ENCODE measurements at regions of chr11 and their contacts with region 1.

Region 1: GRCh38 chr11:64269380-64270234 is 14.9 kb downstream of the BAD start:
- DNase-seq: peak; percentile 97 to 99
- ATAC-seq: peak; percentile 86 to 92 (median 90)
- H3K4me3 ChIP-seq: peak overlapping the region; percentile 70 to 90 (median 79)
- H3K27ac ChIP-seq: peak overlapping the region; percentile 89 to 100 (median 98)
- H3K4me1 ChIP-seq: peaks cover 18 to 55% (median 36%) of the 10 kb centered on the region in 9 donors
- H3K27me3 ChIP-seq: no peaks in the 10 kb centered on the region
- CTCF ChIP-seq: peak in 5 of 9 donors; percentile 4 to 56 (median 39)

Region 2: GRCh38 chr11:64088162-64089026 is 181.2 kb before region 1 on chr11:
- intact Hi-C with region 1: no loop called
- DNase-seq: no peak
- ATAC-seq: no peak
- H3K4me3 ChIP-seq: no peak overlapping the region
- H3K27ac ChIP-seq: no peak overlapping the region
- H3K4me1 ChIP-seq: peaks cover 0 to 26% (median 10%) of the 10 kb centered on the region in 9 donors
- H3K27me3 ChIP-seq: no peaks in the 10 kb centered on the region
- CTCF ChIP-seq: peak in 2 of 9 donors; percentile 9 to 21

Region 3: DNA sequence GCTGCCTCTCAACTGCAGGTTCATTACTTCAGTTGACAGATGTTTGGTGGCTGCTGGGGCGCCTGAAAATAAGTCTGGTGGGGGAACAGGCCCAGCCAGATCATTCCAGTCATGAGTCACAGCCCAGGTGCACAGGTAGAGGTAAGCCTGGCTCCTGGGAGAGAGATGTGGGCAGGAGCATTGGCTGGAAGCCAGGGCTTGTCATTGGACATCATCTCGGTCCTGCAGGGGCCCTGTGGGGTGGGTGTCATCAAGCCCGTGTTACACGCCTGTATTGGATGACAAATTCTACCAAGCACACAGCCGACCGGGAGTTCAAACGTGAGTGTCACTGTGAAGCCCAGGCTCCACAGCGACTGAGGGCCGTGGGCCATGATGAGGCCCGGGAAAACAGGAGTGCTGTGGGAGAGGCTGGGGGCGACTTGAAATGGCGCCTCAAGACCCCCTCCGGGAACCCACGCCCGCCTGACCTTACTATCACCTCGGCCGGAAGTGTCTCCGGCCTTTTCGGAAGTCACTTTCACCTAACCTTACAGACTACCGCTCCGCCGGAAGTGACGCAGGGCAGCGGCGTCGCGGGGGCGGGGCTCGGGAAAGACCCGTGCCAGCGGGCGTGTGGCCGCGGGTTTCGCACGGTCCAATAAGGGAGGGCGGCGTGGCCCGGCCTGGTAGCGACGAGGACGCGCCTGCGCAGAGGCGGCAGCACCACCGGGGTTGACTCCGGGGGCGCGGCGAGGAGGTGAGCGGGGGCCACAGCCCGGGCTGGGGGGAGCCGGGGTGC is 29.0 kb before region 1 on chr11 and contains the start of gene FKBP2:
- intact Hi-C with region 1: loop called in 3 of 10 experiments (anchors 1 to 2 kb)
- DNase-seq: peak; percentile 96 to 98
- ATAC-seq: peak; percentile 75 to 84 (median 80)
- H3K4me3 ChIP-seq: peak within 1 kb of the TSS; percentile 73 to 99 (median 88)
- H3K27ac ChIP-seq: peak within 1 kb of the TSS; percentile 95 to 100 (median 98)
- H3K4me1 ChIP-seq: peaks cover 11 to 68% (median 35%) of the 10 kb centered on the region in 9 donors
- H3K27me3 ChIP-seq: no peaks in the 10 kb centered on the region
- CTCF ChIP-seq: no peak
- total RNA-seq, gene FKBP2: 40.2 to 82.0 (median 45.9) TPM

Region 4: GRCh38 chr11:64252003-64252872 is 17.4 kb before region 1 on chr11:
- intact Hi-C with region 1: loop called in 5 of 10 experiments (anchors 1 to 2 kb)
- DNase-seq: peak; percentile 60 to 63
- ATAC-seq: peak in 7 of 8 donors; percentile 16 to 41 (median 34)
- H3K4me3 ChIP-seq: peak overlapping the region; percentile 70 to 93 (median 84)
- H3K27ac ChIP-seq: peak overlapping the region in 9 of 10 donors; percentile 71 to 87 (median 84)
- H3K4me1 ChIP-seq: peaks cover 4 to 43% (median 38%) of the 10 kb centered on the region in 9 donors
- H3K27me3 ChIP-seq: no peaks in the 10 kb centered on the region
- CTCF ChIP-seq: peak in 3 of 9 donors; percentile 11 to 37 (median 14)

Region 5: DNA sequence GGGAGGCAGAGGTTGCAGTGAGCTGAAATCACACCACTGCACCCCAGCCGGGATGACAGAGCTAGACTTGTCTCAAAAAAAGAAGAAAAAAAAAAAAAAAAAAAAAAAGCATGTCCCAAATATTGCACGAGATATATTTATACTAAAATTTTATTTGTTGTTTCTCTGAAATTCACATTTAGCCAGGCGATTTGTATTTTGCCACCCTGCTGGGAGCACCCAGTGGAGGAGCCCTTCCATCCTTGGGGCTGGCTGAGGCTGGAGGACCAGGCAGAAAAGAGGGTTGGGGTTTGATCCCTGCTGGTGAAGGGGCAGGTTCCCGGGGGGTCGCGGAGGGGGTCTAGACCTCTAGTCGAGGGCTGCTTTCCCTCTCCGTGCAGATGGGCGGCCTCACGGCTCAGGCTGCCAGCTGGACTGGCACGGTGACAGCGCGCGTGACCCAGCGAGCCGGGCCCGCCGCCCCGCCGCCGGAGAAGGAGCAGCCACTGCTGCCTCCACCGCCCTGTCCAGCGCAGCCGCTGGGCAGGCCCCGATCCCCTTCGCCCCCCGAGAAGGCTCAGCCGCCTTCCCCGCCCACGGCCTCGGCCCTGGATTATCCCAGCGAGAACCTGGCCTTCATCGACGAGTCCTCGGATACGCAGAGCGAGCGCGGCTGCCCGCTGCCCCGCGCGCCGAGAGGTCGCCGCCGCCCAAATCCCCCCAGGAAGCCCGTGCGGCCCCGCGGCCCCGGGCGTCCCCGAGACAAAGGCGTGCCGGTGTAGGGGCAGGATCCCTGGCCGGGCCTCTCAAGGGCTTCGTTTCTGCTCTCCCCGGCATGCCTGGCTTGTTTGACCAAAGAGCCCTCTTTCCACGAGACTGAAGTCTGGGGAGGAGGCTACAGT is 29.6 kb after region 1 on chr11:
- intact Hi-C with region 1: loop called in 3 of 10 experiments (anchors 1 to 2 kb)
- DNase-seq: peak; percentile 60 to 74
- ATAC-seq: peak; percentile 21 to 64 (median 51)
- H3K4me3 ChIP-seq: peak overlapping the region in 9 of 10 donors; percentile 27 to 51 (median 48)
- H3K27ac ChIP-seq: peak overlapping the region in 4 of 10 donors; percentile 4 to 58 (median 31)
- H3K4me1 ChIP-seq: peaks cover 14 to 40% (median 33%) of the 10 kb centered on the region in 9 donors
- H3K27me3 ChIP-seq: peaks cover 6 to 78% (median 73%) of the 10 kb centered on the region in 7 donors
- CTCF ChIP-seq: peak in 1 of 9 donors; percentile 14

Measured in heart right ventricle (tissue), 16 donors.